ENCODE measurements at regions of chr11 and their contacts with region 1.

Region 1: DNA sequence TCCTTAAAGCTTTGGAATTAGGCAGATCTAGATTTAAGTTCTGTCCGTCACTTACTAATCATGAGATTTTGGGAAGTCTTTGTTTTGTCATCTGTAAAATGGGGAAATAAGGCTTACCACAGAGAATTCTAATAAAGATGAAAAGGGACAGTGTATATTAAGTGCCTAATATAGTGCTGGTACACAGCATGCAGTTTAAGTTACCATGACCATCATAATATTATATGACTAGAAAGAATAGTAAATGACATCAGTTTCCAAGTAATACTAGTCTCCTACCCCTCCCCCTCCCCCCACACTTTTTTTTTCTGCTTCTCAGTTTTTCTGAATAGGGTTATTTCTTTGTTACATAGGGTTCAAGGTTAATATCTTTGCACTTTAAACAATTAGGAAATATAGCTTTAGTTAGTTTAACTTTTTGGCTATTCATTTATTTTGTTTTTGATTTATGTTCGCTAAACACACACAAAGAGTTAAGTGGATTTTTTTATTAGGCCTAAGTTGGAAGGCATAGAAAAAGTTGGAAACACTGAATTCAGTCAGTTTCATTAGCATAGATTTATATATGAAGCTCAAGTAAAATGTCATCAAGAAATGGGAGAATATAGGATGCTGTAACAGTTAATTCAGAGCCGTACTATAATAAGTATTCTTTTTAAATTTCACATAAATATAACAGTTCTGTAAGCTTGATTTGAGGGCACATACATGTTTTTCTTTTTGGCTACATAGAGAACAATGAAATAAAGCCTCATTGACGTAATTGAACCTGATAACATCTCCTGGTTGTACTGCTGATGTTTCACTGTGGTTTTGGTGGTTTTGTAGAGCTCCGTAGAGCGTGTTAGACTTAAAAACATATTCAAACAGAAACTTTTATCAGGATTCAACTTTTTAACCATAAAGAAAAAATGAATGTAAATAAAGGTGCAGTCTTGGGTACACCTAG is 121.2 kb downstream of the PDE3B start:
- DNase-seq: peak in 7 of 9 donors; percentile 82 to 95 (median 92)
- ATAC-seq: peak; percentile 95
- H3K4me3 ChIP-seq: peak overlapping the region; percentile 30
- H3K4me3 Mint-ChIP-seq: peak overlapping the region in 5 of 10 donors; percentile 54 to 78 (median 62)
- H3K27ac ChIP-seq: peak overlapping the region; percentile 72
- H3K27ac Mint-ChIP-seq: no peak overlapping the region
- H3K4me1 ChIP-seq: peaks cover 36 to 61% of the 10 kb centered on the region in 2 donors
- H3K4me1 Mint-ChIP-seq: peaks cover 15 to 54% (median 34%) of the 10 kb centered on the region in 7 donors
- H3K27me3 ChIP-seq: no peaks in the 10 kb centered on the region
- H3K27me3 Mint-ChIP-seq: no peaks in the 10 kb centered on the region

Region 2: GRCh38 chr11:14163576-14163975 is 601.3 kb before region 1 on chr11:
- CTCF ChIA-PET with region 1: no interaction called
- POLR2A ChIA-PET with region 1: no interaction called
- intact Hi-C with region 1: no loop called
- DNase-seq: no peak
- ATAC-seq: no peak
- H3K4me3 ChIP-seq: no peak overlapping the region
- H3K4me3 Mint-ChIP-seq: no peak overlapping the region
- H3K27ac ChIP-seq: no peak overlapping the region
- H3K27ac Mint-ChIP-seq: no peak overlapping the region
- H3K4me1 ChIP-seq: no peaks in the 10 kb centered on the region
- H3K4me1 Mint-ChIP-seq: peaks cover 0 to 10% (median 0%) of the 10 kb centered on the region in 7 donors
- H3K27me3 ChIP-seq: no peaks in the 10 kb centered on the region
- H3K27me3 Mint-ChIP-seq: peaks cover 0 to 8% (median 0%) of the 10 kb centered on the region in 5 donors

Region 3: GRCh38 chr11:14336507-14337503 is 428.0 kb before region 1 on chr11:
- CTCF ChIA-PET with region 1: no interaction called
- POLR2A ChIA-PET with region 1: no interaction called
- intact Hi-C with region 1: no loop called
- DNase-seq: no peak
- ATAC-seq: peak; percentile 57
- H3K4me3 ChIP-seq: no peak overlapping the region
- H3K4me3 Mint-ChIP-seq: peak overlapping the region in 2 of 10 donors; percentile 12 to 19
- H3K27ac ChIP-seq: no peak overlapping the region
- H3K27ac Mint-ChIP-seq: peak overlapping the region in 2 of 9 donors; percentile 20 to 74
- H3K4me1 ChIP-seq: peaks cover 0 to 4% of the 10 kb centered on the region in 2 donors
- H3K4me1 Mint-ChIP-seq: peaks cover 15 to 50% (median 27%) of the 10 kb centered on the region in 7 donors
- H3K27me3 ChIP-seq: no peaks in the 10 kb centered on the region
- H3K27me3 Mint-ChIP-seq: no peaks in the 10 kb centered on the region

Region 4: DNA sequence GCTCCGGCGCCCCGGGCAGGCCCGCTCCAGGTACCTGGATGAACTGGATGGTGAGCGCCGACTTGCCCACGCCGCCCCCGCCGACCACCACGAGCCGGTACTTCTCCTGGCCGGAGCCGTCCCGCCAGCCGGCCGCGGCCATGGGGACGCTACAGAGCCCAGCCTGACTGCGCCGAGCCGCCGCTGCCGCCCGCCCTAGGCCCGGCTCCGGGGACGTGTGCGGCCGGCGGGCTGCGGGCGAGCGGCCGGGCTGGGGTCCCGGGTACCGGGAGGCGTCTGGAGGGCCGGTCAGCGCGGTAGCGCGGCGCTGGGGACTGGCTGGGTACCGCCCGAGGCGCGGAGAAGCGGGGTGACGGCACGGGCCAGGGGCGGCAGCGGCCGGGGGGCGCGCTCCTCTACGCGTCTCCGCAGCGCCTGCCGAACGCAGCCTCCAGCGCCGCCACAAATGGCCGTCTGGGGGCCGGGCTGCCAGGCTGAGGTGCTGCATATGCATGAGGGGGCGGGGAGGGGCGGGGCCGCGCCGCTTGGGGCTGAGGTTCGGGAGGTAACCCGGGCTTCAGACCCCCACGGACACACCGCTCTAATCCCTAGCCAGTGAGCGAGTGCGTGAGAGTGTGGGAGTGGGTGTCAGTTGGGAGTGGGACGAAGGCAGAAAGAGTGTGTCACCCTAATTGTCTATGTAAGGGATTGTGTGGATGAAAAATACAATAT is 406.0 kb before region 1 on chr11 and contains the start of gene RRAS2:
- CTCF ChIA-PET with region 1: no interaction called
- POLR2A ChIA-PET with region 1: no interaction called
- intact Hi-C with region 1: loop called in 1 of 2 experiments (anchors 5 kb)
- DNase-seq: peak; percentile 67 to 81 (median 78)
- ATAC-seq: peak; percentile 96
- H3K4me3 ChIP-seq: peak within 1 kb of the TSS; percentile 61
- H3K4me3 Mint-ChIP-seq: peak within 1 kb of the TSS; percentile 91 to 98 (median 95)
- H3K27ac ChIP-seq: peak within 1 kb of the TSS; percentile 72
- H3K27ac Mint-ChIP-seq: peak within 1 kb of the TSS; percentile 66 to 93 (median 86)
- H3K4me1 ChIP-seq: peaks cover 7 to 8% of the 10 kb centered on the region in 2 donors
- H3K4me1 Mint-ChIP-seq: peaks cover 25 to 55% (median 30%) of the 10 kb centered on the region in 7 donors
- H3K27me3 ChIP-seq: no peaks in the 10 kb centered on the region
- H3K27me3 Mint-ChIP-seq: peaks cover 0 to 6% (median 0%) of the 10 kb centered on the region in 5 donors
- total RNA-seq, gene RRAS2: 12.6 to 55.3 (median 22.2) TPM

Region 5: DNA sequence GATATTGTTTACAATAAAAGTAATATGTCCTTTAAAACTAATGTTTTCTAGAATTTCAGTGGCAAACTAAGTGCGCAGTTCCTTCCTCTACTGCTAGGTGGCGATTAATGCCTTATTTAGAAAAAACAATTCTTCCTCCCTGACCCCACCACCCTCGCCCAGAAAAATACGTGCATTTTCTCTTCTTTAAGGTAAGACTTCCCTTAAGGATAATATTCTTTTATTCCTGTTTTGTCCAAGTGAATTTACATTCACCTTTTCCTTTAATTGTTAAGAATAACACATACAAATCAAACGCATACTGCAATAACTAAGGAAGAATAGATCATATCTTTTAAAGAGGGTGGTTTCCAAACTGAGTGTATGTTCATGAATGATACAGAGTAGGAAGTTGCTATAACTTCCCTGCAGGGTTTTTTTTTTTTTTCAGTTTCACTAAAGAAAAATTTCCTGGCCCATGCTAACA is 227.7 kb before region 1 on chr11:
- CTCF ChIA-PET with region 1: interaction called, 3 read pairs
- POLR2A ChIA-PET with region 1: no interaction called
- intact Hi-C with region 1: loop called (anchors 1 kb)
- DNase-seq: peak in 7 of 9 donors; percentile 39 to 74 (median 69)
- ATAC-seq: peak; percentile 93
- H3K4me3 ChIP-seq: no peak overlapping the region
- H3K4me3 Mint-ChIP-seq: peak overlapping the region in 9 of 10 donors; percentile 48 to 86 (median 79)
- H3K27ac ChIP-seq: peak overlapping the region; percentile 69
- H3K27ac Mint-ChIP-seq: peak overlapping the region; percentile 77 to 99 (median 90)
- H3K4me1 ChIP-seq: peaks cover 0 to 17% of the 10 kb centered on the region in 2 donors
- H3K4me1 Mint-ChIP-seq: peaks cover 9 to 51% (median 45%) of the 10 kb centered on the region in 7 donors
- H3K27me3 ChIP-seq: no peaks in the 10 kb centered on the region
- H3K27me3 Mint-ChIP-seq: no peaks in the 10 kb centered on the region

Region 6: GRCh38 chr11:14643697-14644225 is 121.1 kb before region 1 on chr11 and contains the start of gene PDE3B:
- CTCF ChIA-PET with region 1: interaction called, 11 read pairs
- POLR2A ChIA-PET with region 1: interaction called, 48 read pairs
- intact Hi-C with region 1: loop called (anchors 1 to 2 kb)
- DNase-seq: peak; percentile 45 to 79 (median 61)
- ATAC-seq: peak; percentile 78
- H3K4me3 ChIP-seq: peak within 1 kb of the TSS; percentile 68
- H3K4me3 Mint-ChIP-seq: peak within 1 kb of the TSS; percentile 90 to 99 (median 94)
- H3K27ac ChIP-seq: peak within 1 kb of the TSS; percentile 89
- H3K27ac Mint-ChIP-seq: peak within 1 kb of the TSS; percentile 69 to 95 (median 92)
- H3K4me1 ChIP-seq: peaks cover 26 to 33% of the 10 kb centered on the region in 2 donors
- H3K4me1 Mint-ChIP-seq: peaks cover 22 to 65% (median 49%) of the 10 kb centered on the region in 7 donors
- H3K27me3 ChIP-seq: no peaks in the 10 kb centered on the region
- H3K27me3 Mint-ChIP-seq: no peaks in the 10 kb centered on the region
- total RNA-seq, gene PDE3B: 79.6 to 268 (median 151) TPM

Region 7: GRCh38 chr11:14657857-14658256 is 107.0 kb before region 1 on chr11:
- CTCF ChIA-PET with region 1: no interaction called
- POLR2A ChIA-PET with region 1: no interaction called
- intact Hi-C with region 1: no loop called
- DNase-seq: no peak
- ATAC-seq: no peak
- H3K4me3 ChIP-seq: no peak overlapping the region
- H3K4me3 Mint-ChIP-seq: no peak overlapping the region
- H3K27ac ChIP-seq: no peak overlapping the region
- H3K27ac Mint-ChIP-seq: no peak overlapping the region
- H3K4me1 ChIP-seq: peaks cover 0 to 16% of the 10 kb centered on the region in 2 donors
- H3K4me1 Mint-ChIP-seq: peaks cover 28 to 74% (median 61%) of the 10 kb centered on the region in 7 donors
- H3K27me3 ChIP-seq: no peaks in the 10 kb centered on the region
- H3K27me3 Mint-ChIP-seq: no peaks in the 10 kb centered on the region

Region 8: DNA sequence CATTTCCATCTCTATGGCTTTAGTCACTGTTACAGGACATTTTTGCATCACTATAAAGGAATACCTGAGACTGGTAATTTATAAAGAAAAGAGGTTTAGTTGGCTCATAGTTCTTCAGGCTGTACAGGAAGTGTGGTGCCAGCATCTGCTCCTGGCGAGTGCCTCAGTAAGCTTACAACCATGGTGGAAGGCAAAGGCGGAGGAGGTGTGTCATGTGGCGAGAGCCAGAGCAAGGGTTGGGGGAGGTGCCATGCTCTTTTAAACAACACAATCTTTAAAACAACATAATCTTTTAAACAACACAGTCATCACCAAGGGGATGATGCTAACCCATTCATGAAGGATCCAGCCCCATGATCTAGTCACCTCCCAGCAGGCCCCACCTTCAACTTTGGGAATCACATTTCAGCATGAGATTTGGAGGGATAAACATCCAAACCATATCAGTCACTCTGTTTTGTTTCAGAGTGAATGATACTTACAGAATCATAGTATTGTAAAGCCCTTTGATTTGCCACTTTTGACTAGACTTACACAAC is 17.9 kb before region 1 on chr11:
- CTCF ChIA-PET with region 1: interaction called, 3 read pairs
- POLR2A ChIA-PET with region 1: interaction called, 3 read pairs
- intact Hi-C with region 1: loop called (anchors 1 kb)
- DNase-seq: no peak
- ATAC-seq: no peak
- H3K4me3 ChIP-seq: no peak overlapping the region
- H3K4me3 Mint-ChIP-seq: peak overlapping the region in 7 of 10 donors; percentile 8 to 59 (median 17)
- H3K27ac ChIP-seq: no peak overlapping the region
- H3K27ac Mint-ChIP-seq: peak overlapping the region; percentile 8 to 78 (median 49)
- H3K4me1 ChIP-seq: peaks cover 2 to 28% of the 10 kb centered on the region in 2 donors
- H3K4me1 Mint-ChIP-seq: peaks cover 34 to 83% (median 68%) of the 10 kb centered on the region in 7 donors
- H3K27me3 ChIP-seq: no peaks in the 10 kb centered on the region
- H3K27me3 Mint-ChIP-seq: no peaks in the 10 kb centered on the region

Region 9: DNA sequence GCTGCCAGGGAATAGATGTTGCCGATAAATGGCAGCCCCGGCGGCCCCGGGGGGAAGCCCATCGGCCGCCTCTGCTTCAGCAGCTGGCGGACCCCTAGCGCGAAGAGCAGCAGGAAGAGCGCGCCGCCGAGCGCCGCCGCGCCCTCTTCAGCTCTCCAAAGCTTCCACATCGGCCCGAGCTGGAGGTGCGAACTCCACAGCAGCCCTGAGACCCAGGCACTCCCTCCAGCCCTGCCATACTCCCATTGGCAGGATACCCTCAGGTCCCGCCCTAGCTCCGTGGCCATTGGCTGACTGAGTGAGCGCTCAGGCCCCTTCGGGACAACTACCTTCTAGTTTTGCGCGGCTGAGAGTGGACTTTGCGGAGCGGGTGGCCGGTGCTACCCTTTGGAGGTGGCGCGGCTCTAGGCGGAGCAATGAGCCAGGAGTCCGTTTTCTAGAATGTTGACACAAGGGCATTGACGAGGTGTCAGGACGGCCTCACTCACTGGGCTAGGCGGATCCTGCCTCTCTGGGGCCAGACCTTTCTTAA is 127.2 kb after region 1 on chr11 and contains the start of gene CYP2R1:
- CTCF ChIA-PET with region 1: no interaction called
- POLR2A ChIA-PET with region 1: interaction called, 8 read pairs
- intact Hi-C with region 1: loop called (anchors 1 to 2 kb)
- DNase-seq: peak in 8 of 9 donors; percentile 76 to 91 (median 89)
- ATAC-seq: peak; percentile 93
- H3K4me3 ChIP-seq: peak within 1 kb of the TSS; percentile 83
- H3K4me3 Mint-ChIP-seq: peak within 1 kb of the TSS; percentile 88 to 99 (median 96)
- H3K27ac ChIP-seq: peak within 1 kb of the TSS; percentile 80
- H3K27ac Mint-ChIP-seq: peak within 1 kb of the TSS; percentile 91 to 98 (median 96)
- H3K4me1 ChIP-seq: peaks cover 3 to 27% of the 10 kb centered on the region in 2 donors
- H3K4me1 Mint-ChIP-seq: peaks cover 17 to 66% (median 44%) of the 10 kb centered on the region in 7 donors
- H3K27me3 ChIP-seq: no peaks in the 10 kb centered on the region
- H3K27me3 Mint-ChIP-seq: no peaks in the 10 kb centered on the region
- total RNA-seq, gene CYP2R1: 13.3 to 18.6 (median 14.7) TPM

Measured in naive thymus-derived CD4-positive, alpha-beta T cell (primary cell).